Thyroid gland (tissue), 4 donors: ENCODE measurements at regions of chr1 and their contacts with region 1.

Region 1: DNA sequence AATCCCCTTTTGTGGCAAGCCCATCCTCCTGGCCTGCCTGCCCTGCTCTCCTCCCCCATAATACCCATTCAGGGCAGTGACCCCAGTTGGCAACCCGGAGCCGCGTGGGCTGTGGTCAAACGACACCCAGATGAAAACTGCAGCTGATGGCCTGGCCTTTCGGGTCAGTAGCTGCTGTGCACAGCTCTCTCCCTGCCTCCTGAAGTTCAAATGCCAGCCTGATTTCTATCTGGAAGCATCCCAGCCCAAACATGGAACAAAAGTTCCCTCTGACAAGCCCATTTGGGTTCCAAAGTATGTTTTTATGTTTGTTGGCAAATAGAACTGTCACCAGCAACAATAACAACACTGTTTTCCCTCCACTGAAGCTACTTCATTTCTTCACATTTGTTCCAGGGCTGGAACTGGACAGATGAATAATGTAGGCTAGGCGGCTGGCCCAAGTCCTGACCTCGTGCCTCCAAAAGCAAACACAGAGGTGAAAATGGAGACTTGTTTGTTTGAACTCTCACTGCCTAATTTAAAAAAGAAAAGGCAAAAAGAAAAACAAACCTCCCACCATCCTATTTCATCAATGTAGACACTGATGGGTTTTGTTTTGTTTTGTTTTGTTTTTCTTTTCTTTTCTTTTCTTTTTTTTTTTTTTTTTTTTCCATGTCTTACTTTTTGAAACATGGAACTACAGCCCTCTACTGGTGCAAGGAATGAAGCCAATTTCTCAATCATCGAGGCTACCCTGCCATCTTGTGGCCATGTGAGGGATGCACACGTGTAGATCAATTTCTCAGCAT is 179.0 kb downstream of the ADSS2 start:
- DNase-seq: peak; percentile 62 to 67
- H3K4me3 ChIP-seq: no peak overlapping the region
- H3K27ac ChIP-seq: no peak overlapping the region
- H3K4me1 ChIP-seq: no peaks in the 10 kb centered on the region
- H3K27me3 ChIP-seq: no peaks in the 10 kb centered on the region
- CTCF ChIP-seq: peak; percentile 52 to 100 (median 90)
- POLR2A ChIP-seq: no peak

Region 2: DNA sequence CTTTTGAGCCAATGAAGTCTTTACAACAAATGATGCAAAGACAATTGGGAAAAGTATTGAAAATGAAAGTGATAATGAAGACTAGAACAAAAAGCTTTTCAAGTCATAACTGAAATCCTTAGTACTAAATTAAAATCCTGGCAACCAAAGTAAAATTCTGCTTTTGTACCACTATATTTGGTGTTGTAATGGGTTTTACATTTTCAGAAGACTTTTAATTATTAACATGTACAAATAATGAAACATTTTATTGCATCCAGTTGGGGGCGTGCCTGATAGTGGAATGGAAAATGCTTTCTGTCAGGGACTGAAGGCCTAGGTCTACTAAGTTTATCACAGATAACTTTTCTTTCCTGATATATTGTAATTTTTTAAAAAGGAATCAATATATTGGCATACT is 927.5 kb before region 1 on chr1:
- intact Hi-C with region 1: loop called (anchors 5 kb)
- DNase-seq: no peak
- H3K4me3 ChIP-seq: no peak overlapping the region
- H3K27ac ChIP-seq: no peak overlapping the region
- H3K4me1 ChIP-seq: no peaks in the 10 kb centered on the region
- H3K27me3 ChIP-seq: no peaks in the 10 kb centered on the region
- CTCF ChIP-seq: no peak
- POLR2A ChIP-seq: no peak

Region 3: DNA sequence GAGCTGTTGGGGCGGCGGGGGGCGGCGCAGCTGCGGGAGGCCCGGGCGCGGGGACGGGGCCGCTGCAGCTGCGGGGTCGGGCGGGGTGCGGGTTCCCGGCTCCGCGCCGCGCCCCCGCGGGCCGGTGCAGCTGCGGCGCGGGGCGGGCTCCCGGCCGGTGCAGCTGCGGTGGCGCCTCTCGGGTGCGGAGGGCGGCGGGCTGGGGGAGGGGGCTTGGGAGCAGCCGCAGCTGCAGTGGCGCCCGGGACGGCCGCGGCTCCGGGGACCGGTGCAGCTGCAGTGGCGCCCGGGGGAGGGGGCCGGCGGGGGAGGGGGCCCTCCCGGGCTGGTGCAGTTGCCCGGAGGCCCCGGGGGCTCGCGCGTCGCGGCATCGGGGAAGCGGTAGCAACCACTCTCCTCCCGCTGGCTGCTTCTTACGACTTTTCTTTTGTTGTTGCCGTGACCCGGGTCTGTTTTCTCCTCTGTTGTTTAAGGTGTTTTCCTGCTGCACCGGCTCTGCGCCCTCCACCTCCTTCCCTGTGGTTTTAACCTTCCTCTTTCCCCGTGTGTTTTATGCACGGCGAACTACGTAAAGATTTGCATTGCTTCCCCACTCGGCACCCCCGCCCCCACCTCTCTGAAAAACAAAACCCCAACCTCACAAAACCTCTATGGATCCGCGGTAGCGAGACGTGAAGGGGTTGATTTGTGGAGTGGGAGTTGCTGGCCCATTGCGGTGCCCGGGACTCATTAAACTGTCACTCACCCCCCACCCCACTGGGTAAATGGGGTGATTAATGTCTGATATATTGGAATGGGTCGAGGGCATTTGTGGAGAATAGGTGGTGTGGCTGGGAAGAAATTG is 223.3 kb before region 1 on chr1:
- intact Hi-C with region 1: loop called (anchors 10 kb)
- DNase-seq: peak; percentile 55 to 61
- H3K4me3 ChIP-seq: peak overlapping the region; percentile 48 to 90 (median 79)
- H3K27ac ChIP-seq: peak overlapping the region; percentile 14 to 62 (median 20)
- H3K4me1 ChIP-seq: peaks cover 6 to 13% of the 10 kb centered on the region in 2 donors
- H3K27me3 ChIP-seq: no peaks in the 10 kb centered on the region
- CTCF ChIP-seq: no peak
- POLR2A ChIP-seq: peak in 1 of 2 donors; percentile 7

Region 4: GRCh38 chr1:244074559-244075171 is 198.0 kb before region 1 on chr1:
- intact Hi-C with region 1: no loop called
- DNase-seq: no peak
- H3K4me3 ChIP-seq: no peak overlapping the region
- H3K27ac ChIP-seq: no peak overlapping the region
- H3K4me1 ChIP-seq: peaks cover 0 to 8% of the 10 kb centered on the region in 2 donors
- H3K27me3 ChIP-seq: no peaks in the 10 kb centered on the region
- CTCF ChIP-seq: no peak
- POLR2A ChIP-seq: no peak